HEK293 (cell line): ENCODE measurements at regions of chr6 and their contacts with region 1.

Region 1: GRCh38 chr6:41367700-41368099 is 32.3 kb downstream of the NCR2 start:
- H3K4me3 ChIP-seq: no peak overlapping the region
- H3K27ac ChIP-seq: no peak overlapping the region
- H3K4me1 ChIP-seq: no peaks in the 10 kb centered on the region
- CTCF ChIP-seq: peak; percentile 90

Region 2: DNA sequence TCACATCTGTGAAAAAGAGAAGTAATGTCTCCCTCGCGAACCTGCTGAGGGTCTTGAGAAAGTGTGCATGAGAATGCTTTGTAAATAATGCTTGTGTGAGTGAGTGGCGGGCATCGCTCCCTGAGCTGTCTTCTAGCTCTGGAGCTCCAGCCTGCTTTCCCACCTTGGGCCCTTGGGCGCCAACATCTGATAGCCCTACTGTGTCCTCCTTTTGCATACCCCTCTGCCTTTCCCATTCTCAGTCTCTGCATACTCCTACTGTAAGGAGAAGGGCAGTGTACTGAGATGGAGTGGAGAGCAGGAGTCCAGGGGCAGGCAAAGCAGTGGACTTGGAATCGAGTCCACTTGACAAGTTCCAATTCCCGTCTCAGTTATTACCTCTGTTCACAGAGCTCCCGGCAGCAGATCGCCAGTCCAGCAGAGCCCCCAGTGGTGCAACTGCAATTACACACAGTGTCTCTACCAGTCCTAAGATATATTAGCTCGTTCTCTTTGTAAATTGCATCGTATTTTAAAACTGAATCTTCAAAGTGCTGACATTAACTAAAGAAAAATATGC is 33.1 kb before region 1 on chr6:
- CTCF ChIA-PET with region 1: interaction called, 16 read pairs
- POLR2A ChIA-PET with region 1: no interaction called
- H3K4me3 ChIP-seq: no peak overlapping the region
- H3K27ac ChIP-seq: no peak overlapping the region
- H3K4me1 ChIP-seq: no peaks in the 10 kb centered on the region; the same call in 1 of the 2 replicates
- CTCF ChIP-seq: no peak; the same call in 1 of the 2 replicates

Region 3: DNA sequence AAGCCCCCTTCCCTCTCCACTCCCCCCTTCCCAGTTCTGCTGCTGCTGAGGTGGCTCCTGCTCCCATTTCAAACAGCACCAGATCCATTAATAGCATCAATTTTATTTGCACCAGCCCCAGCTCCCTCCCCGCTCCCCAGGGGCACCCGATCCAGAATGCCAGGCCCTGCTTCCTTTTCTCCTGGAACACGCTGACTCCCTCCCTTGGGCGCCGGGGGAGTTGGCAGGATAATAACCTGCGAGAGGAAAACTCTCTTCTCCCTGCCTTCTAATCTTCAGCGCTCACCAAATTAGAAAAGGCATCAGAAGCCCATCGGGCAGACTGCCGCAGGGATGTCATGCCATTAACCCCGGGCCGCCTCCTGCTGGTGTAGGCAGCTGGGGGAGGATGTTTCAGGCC is 45.5 kb after region 1 on chr6:
- CTCF ChIA-PET with region 1: interaction called, 15 read pairs
- POLR2A ChIA-PET with region 1: no interaction called
- H3K4me3 ChIP-seq: no peak overlapping the region
- H3K27ac ChIP-seq: no peak overlapping the region
- H3K4me1 ChIP-seq: no peaks in the 10 kb centered on the region
- CTCF ChIP-seq: no peak

Region 4: DNA sequence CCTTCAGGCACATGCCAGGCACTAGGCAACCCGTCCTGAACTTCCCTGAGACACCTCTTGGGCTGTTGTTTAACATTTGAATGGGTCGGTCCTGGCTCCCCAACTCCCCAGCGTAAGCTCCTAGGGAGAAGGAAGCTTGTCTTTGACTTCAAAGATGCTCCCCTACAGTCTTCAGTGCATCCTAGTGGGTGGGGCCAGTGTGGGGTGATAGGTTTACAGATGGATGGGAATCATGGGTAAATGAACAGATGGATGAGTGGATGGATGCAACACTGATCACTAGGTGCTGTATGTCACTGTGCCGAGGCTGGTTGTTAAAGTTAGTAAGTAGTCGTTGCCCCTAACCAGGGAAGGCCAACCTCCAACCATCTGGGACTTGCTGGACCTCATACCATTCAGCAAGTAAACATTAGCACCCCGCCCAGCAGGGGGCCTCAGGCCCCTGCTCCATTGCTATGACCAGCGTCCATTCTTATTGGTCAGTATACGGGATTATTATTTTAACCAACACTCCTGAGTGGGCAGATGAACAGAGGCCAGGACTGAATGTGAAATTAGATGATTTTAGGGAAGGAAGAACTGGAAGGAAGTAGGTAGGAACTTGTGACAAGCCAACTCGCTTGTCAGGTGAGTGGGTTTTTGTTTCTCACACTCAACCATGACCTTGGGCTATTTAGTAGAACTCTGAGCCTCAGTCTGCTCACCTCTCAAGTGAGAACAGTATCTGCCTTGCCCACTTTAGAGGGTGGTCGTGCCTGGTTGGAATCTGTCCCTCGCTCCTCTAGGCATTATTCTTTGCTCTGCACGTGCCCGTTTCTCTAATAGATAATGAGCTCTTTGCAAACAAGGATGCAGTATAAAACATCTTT is 95.6 kb after region 1 on chr6:
- CTCF ChIA-PET with region 1: interaction called, 27 read pairs
- POLR2A ChIA-PET with region 1: no interaction called
- H3K4me3 ChIP-seq: no peak overlapping the region
- H3K27ac ChIP-seq: no peak overlapping the region
- H3K4me1 ChIP-seq: no peaks in the 10 kb centered on the region
- CTCF ChIP-seq: peak; percentile 19; the same call in 1 of the 2 replicates

Region 5: GRCh38 chr6:41608443-41609151 is 240.9 kb after region 1 on chr6:
- CTCF ChIA-PET with region 1: interaction called, 77 read pairs
- POLR2A ChIA-PET with region 1: no interaction called
- H3K4me3 ChIP-seq: no peak overlapping the region
- H3K27ac ChIP-seq: no peak overlapping the region
- H3K4me1 ChIP-seq: no peaks in the 10 kb centered on the region
- CTCF ChIP-seq: no peak

Region 6: DNA sequence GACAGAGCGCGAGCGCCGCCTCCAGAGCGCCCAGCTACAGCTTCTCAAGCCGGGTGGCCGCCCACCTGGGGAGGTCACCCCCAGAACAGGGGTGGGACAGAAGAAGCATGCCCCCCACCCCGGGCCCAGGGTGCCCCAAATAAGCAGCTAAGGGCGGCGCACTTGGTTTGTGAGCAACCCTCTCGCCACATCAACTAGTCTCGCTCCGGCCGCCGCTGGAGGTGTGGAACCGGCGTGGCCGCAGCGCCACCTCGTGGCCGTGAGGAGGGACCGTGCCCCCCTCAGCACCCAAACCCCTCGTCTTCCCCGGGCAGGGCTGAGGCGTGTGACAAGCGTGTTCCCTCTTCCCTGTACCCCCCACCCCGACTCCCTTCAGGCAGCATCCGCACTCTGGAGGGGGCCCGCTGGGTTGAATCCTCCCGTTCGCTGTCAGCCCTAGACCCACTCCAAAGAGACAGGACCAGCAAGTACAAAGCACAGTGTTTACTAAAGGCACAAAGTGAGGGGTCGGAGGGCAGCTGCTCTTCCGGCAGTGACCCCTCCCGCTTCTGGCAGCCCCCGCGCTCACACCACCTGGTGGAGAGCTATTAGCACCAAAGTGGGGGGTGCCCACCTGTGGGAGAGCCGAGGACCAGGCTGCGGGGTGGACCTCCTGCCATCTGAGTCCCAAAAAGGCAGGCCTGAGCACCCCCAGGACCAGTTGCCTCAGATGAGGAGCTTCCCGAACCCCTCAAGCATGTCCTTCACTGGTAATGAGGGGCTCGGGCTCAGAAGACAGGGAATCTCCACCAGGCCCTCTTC is 316.0 kb after region 1 on chr6:
- CTCF ChIA-PET with region 1: interaction called, 266 read pairs
- POLR2A ChIA-PET with region 1: interaction called, 6 read pairs
- H3K4me3 ChIP-seq: no peak overlapping the region
- H3K27ac ChIP-seq: no peak overlapping the region
- H3K4me1 ChIP-seq: no peaks in the 10 kb centered on the region
- CTCF ChIP-seq: peak; percentile 94

Region 7: GRCh38 chr6:42043787-42044475 is 676.2 kb after region 1 on chr6:
- CTCF ChIA-PET with region 1: interaction called, 13 read pairs
- POLR2A ChIA-PET with region 1: no interaction called
- H3K4me3 ChIP-seq: no peak overlapping the region
- H3K27ac ChIP-seq: no peak overlapping the region
- H3K4me1 ChIP-seq: peaks cover 18% of the 10 kb centered on the region
- CTCF ChIP-seq: peak; percentile 93